GM10248 (cell line): ENCODE measurements at regions of chr7 and their contacts with region 1.

Region 1: GRCh38 chr7:101287032-101287431 is 34.6 kb downstream of the IFT22 start:
- DNase-seq: no peak
- CTCF ChIP-seq: no peak

Region 2: GRCh38 chr7:101273206-101273605 is 13.8 kb before region 1 on chr7:
- CTCF ChIA-PET with region 1: interaction called, 10 read pairs
- POLR2A ChIA-PET with region 1: interaction called, 3 read pairs
- DNase-seq: no peak
- CTCF ChIP-seq: no peak

Region 3: GRCh38 chr7:101299511-101300464 is 12.8 kb after region 1 on chr7:
- CTCF ChIA-PET with region 1: interaction called, 33 read pairs
- POLR2A ChIA-PET with region 1: no interaction called
- DNase-seq: no peak
- CTCF ChIP-seq: no peak